Activated naive CD4-positive, alpha-beta T cell treated with anti-CD3 and anti-CD28 coated beads for 36 hours (primary cell): ENCODE measurements at regions of chr4 and their contacts with region 1.

Region 1: DNA sequence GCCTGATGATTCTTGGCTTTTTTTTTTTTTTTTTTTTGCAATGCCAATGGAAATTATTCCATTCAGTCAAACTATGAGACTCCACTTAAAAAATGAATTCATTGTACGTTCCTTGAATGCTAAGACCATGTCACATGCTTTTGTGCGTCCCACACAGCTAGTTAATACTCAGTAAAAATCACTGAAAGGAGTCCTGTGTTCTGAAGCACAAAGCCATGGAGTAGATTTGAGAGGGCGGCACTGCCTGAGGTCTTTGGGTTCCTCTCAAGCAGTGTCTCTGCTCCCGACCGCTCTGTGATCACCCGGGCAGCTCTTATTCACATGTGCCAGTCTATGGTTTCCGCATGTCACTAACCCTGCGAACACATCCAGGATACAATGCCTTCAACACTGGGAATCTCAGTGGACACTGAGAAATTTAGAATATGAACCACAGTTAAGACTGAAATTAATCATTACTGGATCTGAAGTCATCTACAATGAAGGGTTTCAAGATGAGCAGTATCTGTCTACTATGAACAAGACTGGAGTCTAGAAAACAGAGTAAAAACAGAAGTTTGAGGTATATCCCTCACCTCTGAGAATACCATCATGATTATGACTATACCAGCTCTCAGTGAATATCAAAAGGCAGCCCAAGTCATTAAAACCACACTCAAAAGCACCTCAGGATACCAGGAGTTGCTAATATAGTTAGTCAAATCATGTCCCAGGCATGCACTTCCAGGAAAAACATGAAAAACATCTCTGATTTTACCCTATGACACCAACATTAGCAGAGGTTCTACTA is 193.0 kb downstream of the MGST2 start:
- DNase-seq: peak; percentile 55
- H3K4me3 Mint-ChIP-seq: no peak overlapping the region
- H3K27ac Mint-ChIP-seq: peak overlapping the region; percentile 22
- H3K4me1 Mint-ChIP-seq: peaks cover 19% of the 10 kb centered on the region
- H3K27me3 Mint-ChIP-seq: peaks cover 19% of the 10 kb centered on the region

Region 2: DNA sequence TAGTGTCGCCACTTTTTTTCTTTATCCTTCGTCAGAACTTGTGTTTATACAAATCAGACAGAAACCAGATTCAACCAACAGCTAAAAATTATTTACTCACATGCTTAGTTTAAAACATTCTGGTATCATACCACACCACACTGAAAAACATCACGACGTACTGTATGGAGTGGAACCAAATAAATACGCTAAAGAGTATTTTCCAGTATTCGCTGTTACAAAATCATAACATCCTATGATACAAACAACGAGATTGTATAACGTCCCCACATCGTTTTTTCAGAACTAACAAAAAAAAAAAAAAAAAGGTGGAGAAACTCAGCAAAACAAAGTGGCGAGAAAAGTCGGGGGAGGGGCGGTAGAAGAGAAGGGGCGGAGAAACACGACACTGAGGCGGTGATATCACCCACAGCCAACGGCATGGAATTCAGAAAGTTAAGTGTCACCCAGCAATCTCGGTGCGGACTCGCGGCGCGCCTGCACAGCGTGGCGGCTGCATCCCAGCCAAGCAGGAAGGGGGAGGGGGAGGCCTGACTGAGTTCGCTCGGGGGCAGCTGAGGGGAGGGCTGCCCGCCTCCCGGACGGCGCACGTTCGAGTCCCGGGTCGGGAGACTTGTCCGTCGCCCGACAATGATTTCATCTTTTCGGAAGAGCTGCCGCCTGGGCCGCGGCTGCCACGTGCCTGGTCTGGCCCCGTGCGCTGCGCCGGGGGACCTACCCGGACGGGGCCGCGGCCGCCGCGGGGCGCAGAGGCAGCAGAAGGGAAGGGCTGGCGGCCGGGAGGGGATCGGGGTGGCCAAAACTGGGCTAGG is 303.5 kb before region 1 on chr4:
- CTCF ChIA-PET with region 1: no interaction called
- intact Hi-C with region 1: loop called (anchors 2 kb)
- DNase-seq: peak; percentile 92
- H3K4me3 Mint-ChIP-seq: peak overlapping the region; percentile 94
- H3K27ac Mint-ChIP-seq: peak overlapping the region; percentile 90
- H3K4me1 Mint-ChIP-seq: peaks cover 41% of the 10 kb centered on the region
- H3K27me3 Mint-ChIP-seq: no peaks in the 10 kb centered on the region

Region 3: DNA sequence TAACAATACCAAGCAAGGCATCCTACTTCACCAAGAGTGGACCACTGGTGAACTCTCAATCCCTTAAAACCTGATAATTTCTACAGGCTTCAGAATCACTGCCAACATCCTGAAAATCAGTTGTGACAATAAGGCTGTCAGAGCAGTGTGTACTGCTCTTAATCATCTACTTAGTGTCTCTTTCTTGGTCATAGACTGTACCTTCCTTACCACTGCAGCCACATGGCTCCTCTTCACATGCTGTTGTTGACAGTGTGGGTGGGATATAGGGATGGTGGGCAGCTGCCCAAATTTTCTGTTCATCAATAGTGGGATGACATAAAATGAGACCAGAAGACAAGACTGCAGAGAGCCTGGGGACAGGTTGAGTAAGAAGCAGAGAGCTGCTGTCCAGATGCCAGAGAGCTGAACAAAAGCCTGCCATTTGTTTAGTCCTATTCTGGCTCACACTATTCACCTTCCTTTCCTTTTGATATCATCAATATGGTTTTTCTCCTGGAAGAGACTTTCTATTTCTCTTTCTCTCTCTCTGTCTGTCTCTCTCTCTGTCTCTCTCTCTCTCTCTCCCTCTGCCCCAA is 14.1 kb before region 1 on chr4:
- CTCF ChIA-PET with region 1: interaction called, 4 read pairs
- intact Hi-C with region 1: loop called (anchors 1 kb)
- DNase-seq: no peak
- H3K4me3 Mint-ChIP-seq: no peak overlapping the region
- H3K27ac Mint-ChIP-seq: no peak overlapping the region
- H3K4me1 Mint-ChIP-seq: peaks cover 7% of the 10 kb centered on the region
- H3K27me3 Mint-ChIP-seq: no peaks in the 10 kb centered on the region

Region 4: GRCh38 chr4:139950568-139950967 is 91.9 kb after region 1 on chr4:
- CTCF ChIA-PET with region 1: no interaction called
- intact Hi-C with region 1: loop called (anchors 1 kb)
- DNase-seq: peak; percentile 60
- H3K4me3 Mint-ChIP-seq: no peak overlapping the region
- H3K27ac Mint-ChIP-seq: peak overlapping the region; percentile 48
- H3K4me1 Mint-ChIP-seq: peaks cover 25% of the 10 kb centered on the region
- H3K27me3 Mint-ChIP-seq: no peaks in the 10 kb centered on the region

Region 5: GRCh38 chr4:140000232-140000631 is 141.6 kb after region 1 on chr4:
- CTCF ChIA-PET with region 1: no interaction called
- intact Hi-C with region 1: no loop called
- DNase-seq: no peak
- H3K4me3 Mint-ChIP-seq: no peak overlapping the region
- H3K27ac Mint-ChIP-seq: no peak overlapping the region
- H3K4me1 Mint-ChIP-seq: no peaks in the 10 kb centered on the region
- H3K27me3 Mint-ChIP-seq: peaks cover 2% of the 10 kb centered on the region

Region 6: GRCh38 chr4:140028676-140029517 is 170.3 kb after region 1 on chr4:
- CTCF ChIA-PET with region 1: no interaction called
- intact Hi-C with region 1: no loop called
- DNase-seq: no peak
- H3K4me3 Mint-ChIP-seq: no peak overlapping the region
- H3K27ac Mint-ChIP-seq: no peak overlapping the region
- H3K4me1 Mint-ChIP-seq: no peaks in the 10 kb centered on the region
- H3K27me3 Mint-ChIP-seq: peaks cover 5% of the 10 kb centered on the region

Region 7: DNA sequence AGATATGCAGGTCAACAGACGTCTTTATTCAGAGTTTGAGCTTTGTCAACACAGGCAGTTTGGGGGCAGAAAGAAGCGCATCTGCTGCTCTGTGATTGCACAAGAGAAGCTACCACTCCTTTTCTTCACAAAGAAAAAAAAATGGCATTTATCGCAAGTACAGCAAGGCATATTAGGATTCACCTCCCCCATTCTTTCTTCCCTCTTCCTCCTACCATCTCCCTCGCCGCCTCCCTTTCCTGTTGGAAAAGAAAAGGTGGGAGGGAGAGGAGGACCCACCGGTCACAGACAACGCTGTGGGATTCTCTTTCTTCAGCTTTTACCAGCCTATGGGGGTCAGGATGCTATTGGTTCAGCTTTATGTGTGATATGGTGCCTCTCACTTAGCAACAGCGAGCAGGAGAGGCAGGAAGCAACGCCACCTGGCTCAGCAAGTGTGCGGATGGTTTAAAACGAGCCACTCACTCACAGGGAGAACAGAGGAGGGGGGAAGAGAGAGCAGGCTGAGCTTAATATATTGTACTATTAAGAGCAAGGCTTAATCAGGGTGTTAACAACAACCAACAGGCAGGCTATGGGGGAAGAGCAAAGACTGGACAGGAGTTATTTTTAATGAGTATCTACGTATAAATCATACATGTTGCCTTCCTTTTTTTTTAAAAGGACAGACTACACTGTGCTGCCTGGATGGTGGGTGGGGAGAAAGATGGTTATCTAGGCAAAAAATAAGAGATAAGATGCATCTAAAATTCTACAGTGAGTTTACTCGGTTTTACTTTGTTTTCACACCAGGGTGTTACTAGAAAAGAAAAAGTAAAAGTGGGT is 190.6 kb after region 1 on chr4:
- CTCF ChIA-PET with region 1: no interaction called
- intact Hi-C with region 1: loop called (anchors 1 kb)
- DNase-seq: peak; percentile 78
- H3K4me3 Mint-ChIP-seq: peak overlapping the region; percentile 78
- H3K27ac Mint-ChIP-seq: peak overlapping the region; percentile 14
- H3K4me1 Mint-ChIP-seq: peaks cover 31% of the 10 kb centered on the region
- H3K27me3 Mint-ChIP-seq: peaks cover 2% of the 10 kb centered on the region

Region 8: GRCh38 chr4:140103676-140104075 is 245.0 kb after region 1 on chr4:
- CTCF ChIA-PET with region 1: no interaction called
- intact Hi-C with region 1: loop called (anchors 1 kb)
- DNase-seq: peak; percentile 64
- H3K4me3 Mint-ChIP-seq: no peak overlapping the region
- H3K27ac Mint-ChIP-seq: no peak overlapping the region
- H3K4me1 Mint-ChIP-seq: peaks cover 48% of the 10 kb centered on the region
- H3K27me3 Mint-ChIP-seq: peaks cover 2% of the 10 kb centered on the region

Region 9: GRCh38 chr4:140252742-140253555 is 394.3 kb after region 1 on chr4:
- CTCF ChIA-PET with region 1: no interaction called
- intact Hi-C with region 1: loop called (anchors 2 kb)
- DNase-seq: peak; percentile 65
- H3K4me3 Mint-ChIP-seq: peak overlapping the region; percentile 5
- H3K27ac Mint-ChIP-seq: no peak overlapping the region
- H3K4me1 Mint-ChIP-seq: peaks cover 11% of the 10 kb centered on the region
- H3K27me3 Mint-ChIP-seq: peaks cover 6% of the 10 kb centered on the region